MCF 10A (cell line): ENCODE measurements at regions of chr7 and their contacts with region 1.

Region 1: GRCh38 chr7:134646425-134647305 is at the start of gene BPGM:
- DNase-seq: peak; percentile 100
- H3K4me3 Mint-ChIP-seq: no peak within 1 kb of the TSS
- H3K27ac Mint-ChIP-seq: no peak within 1 kb of the TSS
- H3K4me1 Mint-ChIP-seq: peaks cover 8% of the 10 kb centered on the region
- H3K27me3 Mint-ChIP-seq: no peaks in the 10 kb centered on the region
- CTCF ChIP-seq: no peak
- total RNA-seq, gene BPGM: 8.2 and 10.8 TPM in 2 replicates

Region 2: GRCh38 chr7:134255814-134256213 is 390.9 kb before region 1 on chr7:
- CTCF ChIA-PET with region 1: no interaction called
- POLR2A ChIA-PET with region 1: no interaction called
- intact Hi-C with region 1: no loop called
- DNase-seq: peak; percentile 2
- H3K4me3 Mint-ChIP-seq: no peak overlapping the region
- H3K27ac Mint-ChIP-seq: no peak overlapping the region
- H3K4me1 Mint-ChIP-seq: no peaks in the 10 kb centered on the region
- H3K27me3 Mint-ChIP-seq: no peaks in the 10 kb centered on the region
- CTCF ChIP-seq: no peak

Region 3: DNA sequence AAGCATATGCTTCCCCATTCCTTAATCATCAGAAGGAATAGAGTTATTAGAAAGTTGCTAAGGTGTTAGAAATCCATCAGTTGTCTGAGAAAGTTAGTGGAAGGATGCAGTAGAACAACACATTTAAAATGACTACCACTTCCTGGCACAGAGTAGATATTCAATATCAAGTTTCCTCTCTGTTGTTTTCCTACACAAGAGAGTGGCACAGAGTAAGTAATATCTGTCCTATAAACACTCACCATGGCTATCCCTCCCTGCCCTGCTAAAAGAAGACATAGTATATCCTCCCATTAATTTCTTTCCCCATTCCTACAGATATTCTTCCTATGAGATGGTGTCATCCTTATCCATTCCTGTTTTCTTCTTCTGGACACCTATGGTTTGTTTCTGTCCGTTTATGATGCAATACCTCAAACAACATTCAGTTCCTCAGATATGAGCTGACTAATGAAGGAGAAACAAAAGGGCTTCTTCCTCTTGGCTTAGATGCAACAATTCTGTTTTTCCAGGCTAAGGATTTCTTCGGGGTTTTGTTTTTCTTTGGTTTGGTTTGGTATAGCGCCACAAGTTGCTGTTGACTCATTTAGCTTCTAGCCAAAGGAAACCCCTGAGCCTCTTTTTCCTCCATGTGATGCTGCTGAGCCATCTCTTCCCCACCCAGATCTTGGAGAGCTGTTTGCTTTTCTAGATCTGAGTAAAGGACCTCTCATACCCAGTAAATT is 32.9 kb before region 1 on chr7:
- CTCF ChIA-PET with region 1: interaction called, 7 read pairs
- POLR2A ChIA-PET with region 1: interaction called, 46 read pairs
- intact Hi-C with region 1: loop called (anchors 1 kb)
- DNase-seq: peak; percentile 97
- H3K4me3 Mint-ChIP-seq: no peak overlapping the region
- H3K27ac Mint-ChIP-seq: peak overlapping the region; percentile 85
- H3K4me1 Mint-ChIP-seq: peaks cover 39% of the 10 kb centered on the region
- H3K27me3 Mint-ChIP-seq: no peaks in the 10 kb centered on the region
- CTCF ChIP-seq: no peak

Region 4: DNA sequence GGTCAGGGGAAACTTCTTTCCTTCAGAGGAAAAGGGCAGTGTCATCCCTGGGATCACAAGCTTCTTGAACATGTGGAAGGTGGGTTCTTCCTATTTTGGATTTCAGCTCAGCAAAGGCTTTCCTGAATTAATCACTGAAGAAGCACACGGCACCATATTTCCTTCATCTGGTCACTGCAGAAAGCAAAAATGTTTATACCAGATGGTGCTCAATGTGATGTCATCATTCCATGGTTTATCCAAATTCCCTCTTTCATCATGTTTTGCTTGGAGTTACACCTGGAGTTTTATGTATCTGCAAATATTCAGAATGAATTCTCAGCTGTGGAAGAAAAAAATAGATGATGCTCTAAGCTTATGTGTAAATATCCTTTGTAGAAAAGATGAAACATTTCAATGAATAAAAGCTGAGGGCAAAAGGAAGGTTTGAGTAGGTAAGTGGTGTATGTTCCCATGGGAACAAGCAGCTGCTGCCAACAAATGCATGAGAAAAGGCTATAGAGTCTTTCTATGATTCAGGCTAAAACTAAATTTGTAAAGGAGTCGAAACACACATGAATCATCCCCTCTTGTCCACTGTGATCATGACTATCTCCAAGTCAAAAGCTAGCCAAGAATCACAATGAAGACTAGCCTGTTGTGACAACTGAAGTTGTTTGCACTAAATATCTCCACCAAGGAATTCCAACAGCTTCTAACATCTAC is 26.9 kb before region 1 on chr7:
- CTCF ChIA-PET with region 1: interaction called, 14 read pairs
- POLR2A ChIA-PET with region 1: interaction called, 61 read pairs
- intact Hi-C with region 1: loop called (anchors 1 kb)
- DNase-seq: peak; percentile 92
- H3K4me3 Mint-ChIP-seq: no peak overlapping the region
- H3K27ac Mint-ChIP-seq: peak overlapping the region; percentile 94
- H3K4me1 Mint-ChIP-seq: peaks cover 58% of the 10 kb centered on the region
- H3K27me3 Mint-ChIP-seq: no peaks in the 10 kb centered on the region
- CTCF ChIP-seq: no peak

Region 5: DNA sequence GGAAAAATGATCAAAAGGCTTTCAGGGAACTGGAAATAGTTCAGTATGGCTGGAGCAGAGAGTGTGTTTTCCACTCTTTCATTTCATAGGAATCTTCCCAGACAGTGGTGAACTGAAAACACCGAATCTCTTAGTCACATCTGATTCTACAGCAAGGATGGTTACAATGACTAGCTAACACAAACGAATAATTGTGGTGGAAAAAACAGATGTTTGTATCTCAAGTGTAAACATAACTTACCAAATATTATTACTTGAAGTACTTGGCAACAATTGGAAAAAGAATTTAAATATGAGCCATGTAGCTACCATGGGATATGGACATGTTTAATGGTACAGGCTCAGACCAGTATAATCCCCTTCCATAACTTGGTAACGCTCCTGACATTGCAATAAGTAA is 21.1 kb before region 1 on chr7:
- CTCF ChIA-PET with region 1: interaction called, 14 read pairs
- POLR2A ChIA-PET with region 1: interaction called, 75 read pairs
- intact Hi-C with region 1: no loop called
- DNase-seq: no peak
- H3K4me3 Mint-ChIP-seq: no peak overlapping the region
- H3K27ac Mint-ChIP-seq: no peak overlapping the region
- H3K4me1 Mint-ChIP-seq: peaks cover 20% of the 10 kb centered on the region
- H3K27me3 Mint-ChIP-seq: no peaks in the 10 kb centered on the region
- CTCF ChIP-seq: no peak

Region 6: GRCh38 chr7:134660961-134661376 is 14.3 kb after region 1 on chr7:
- CTCF ChIA-PET with region 1: interaction called, 5 read pairs
- POLR2A ChIA-PET with region 1: interaction called, 35 read pairs
- intact Hi-C with region 1: no loop called
- DNase-seq: no peak
- H3K4me3 Mint-ChIP-seq: no peak overlapping the region
- H3K27ac Mint-ChIP-seq: peak overlapping the region; percentile 15
- H3K4me1 Mint-ChIP-seq: peaks cover 6% of the 10 kb centered on the region
- H3K27me3 Mint-ChIP-seq: no peaks in the 10 kb centered on the region
- CTCF ChIP-seq: no peak

Region 7: GRCh38 chr7:134710859-134711624 is 64.4 kb after region 1 on chr7:
- CTCF ChIA-PET with region 1: no interaction called
- POLR2A ChIA-PET with region 1: no interaction called
- intact Hi-C with region 1: no loop called
- DNase-seq: no peak
- H3K4me3 Mint-ChIP-seq: no peak overlapping the region
- H3K27ac Mint-ChIP-seq: no peak overlapping the region
- H3K4me1 Mint-ChIP-seq: no peaks in the 10 kb centered on the region
- H3K27me3 Mint-ChIP-seq: no peaks in the 10 kb centered on the region
- CTCF ChIP-seq: no peak

Region 8: GRCh38 chr7:134778941-134779740 is 132.5 kb after region 1 on chr7 and contains the start of gene CALD1:
- CTCF ChIA-PET with region 1: no interaction called
- POLR2A ChIA-PET with region 1: interaction called, 11 read pairs
- intact Hi-C with region 1: no loop called
- DNase-seq: peak; percentile 94
- H3K4me3 Mint-ChIP-seq: peak within 1 kb of the TSS; percentile 88
- H3K27ac Mint-ChIP-seq: peak within 1 kb of the TSS; percentile 88
- H3K4me1 Mint-ChIP-seq: peaks cover 36% of the 10 kb centered on the region
- H3K27me3 Mint-ChIP-seq: no peaks in the 10 kb centered on the region
- CTCF ChIP-seq: no peak
- total RNA-seq, gene CALD1: 130 and 183 TPM in 2 replicates

Region 9: DNA sequence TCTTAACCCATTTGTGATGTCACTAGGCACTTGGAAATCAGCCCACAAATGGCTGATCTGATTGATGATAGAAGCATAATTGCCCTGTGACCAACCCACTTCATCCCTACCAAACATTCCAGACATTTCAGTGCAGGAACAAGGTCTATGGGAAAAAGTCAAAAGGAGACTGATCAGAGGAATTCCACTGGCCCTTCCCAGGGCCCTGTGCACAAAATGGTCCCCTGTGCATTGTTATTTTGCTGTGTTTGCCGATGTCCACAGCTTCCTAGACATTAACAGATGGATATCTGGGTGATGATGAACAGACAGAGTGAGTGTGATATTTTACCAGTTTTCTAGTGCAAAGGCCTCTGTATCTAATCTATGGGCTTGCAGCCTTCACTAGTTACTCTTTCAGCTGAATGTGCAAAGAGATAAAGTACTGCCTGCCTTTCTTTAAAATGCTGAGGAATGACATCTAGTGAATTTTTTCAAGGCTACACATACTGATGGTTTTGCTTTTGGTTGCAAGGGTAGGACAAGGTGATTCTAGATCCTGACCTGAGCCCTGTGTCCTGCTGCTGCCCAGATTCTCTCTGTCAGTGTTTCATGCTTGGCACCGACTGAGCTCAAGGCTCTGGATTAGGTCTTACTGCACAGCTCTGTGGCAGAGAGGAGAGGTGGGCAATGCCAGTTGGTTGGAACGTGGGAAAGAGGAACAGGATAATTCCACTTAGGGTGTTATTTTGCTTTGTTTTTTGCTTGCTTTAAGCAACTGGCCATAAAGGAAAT is 188.2 kb after region 1 on chr7:
- CTCF ChIA-PET with region 1: no interaction called
- POLR2A ChIA-PET with region 1: no interaction called
- intact Hi-C with region 1: no loop called
- DNase-seq: no peak
- H3K4me3 Mint-ChIP-seq: no peak overlapping the region
- H3K27ac Mint-ChIP-seq: no peak overlapping the region
- H3K4me1 Mint-ChIP-seq: no peaks in the 10 kb centered on the region
- H3K27me3 Mint-ChIP-seq: no peaks in the 10 kb centered on the region
- CTCF ChIP-seq: no peak

Region 10: GRCh38 chr7:135170274-135170997 is 523.8 kb after region 1 on chr7 and contains the start of gene CYREN:
- CTCF ChIA-PET with region 1: interaction called, 4 read pairs
- POLR2A ChIA-PET with region 1: interaction called, 16 read pairs
- intact Hi-C with region 1: loop called (anchors 10 kb)
- DNase-seq: peak; percentile 95
- H3K4me3 Mint-ChIP-seq: peak within 1 kb of the TSS; percentile 79
- H3K27ac Mint-ChIP-seq: peak within 1 kb of the TSS; percentile 88
- H3K4me1 Mint-ChIP-seq: peaks cover 34% of the 10 kb centered on the region
- H3K27me3 Mint-ChIP-seq: no peaks in the 10 kb centered on the region
- CTCF ChIP-seq: peak; percentile 44
- total RNA-seq, gene CYREN: 66.0 and 71.0 TPM in 2 replicates